Mucosa of descending colon (tissue), 3 donors: ENCODE measurements at regions of chr16 and their contacts with region 1.

Region 1: DNA sequence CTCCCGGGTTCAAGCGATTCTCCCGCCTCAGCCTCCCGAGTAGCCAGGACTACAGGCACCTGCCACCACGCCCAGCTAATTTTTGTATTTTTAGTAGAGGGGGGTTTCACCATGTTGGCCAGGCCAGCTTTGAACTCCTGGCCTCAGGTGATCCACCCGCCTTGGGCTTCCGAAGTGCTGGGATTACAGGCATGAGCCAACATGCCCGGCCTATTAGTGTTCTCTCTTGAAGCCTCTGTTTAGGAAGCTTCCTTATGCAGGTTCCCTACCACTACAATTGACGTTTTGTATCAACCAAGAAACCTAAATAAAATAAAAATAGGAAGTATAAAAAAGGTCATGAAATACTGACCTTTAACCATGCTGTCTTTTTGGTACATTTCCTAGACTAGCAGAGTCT is 16.0 kb downstream of the CHST5 start:
- DNase-seq: no peak
- ATAC-seq: no peak
- H3K4me3 ChIP-seq: no peak overlapping the region
- H3K4me1 ChIP-seq: no peaks in the 10 kb centered on the region
- CTCF ChIP-seq: no peak

Region 2: GRCh38 chr16:75464130-75464918 is 55.6 kb before region 1 on chr16 and contains the start of gene TMEM170A:
- intact Hi-C with region 1: loop called in 1 of 2 experiments (anchors 10 kb)
- DNase-seq: peak; percentile 100
- ATAC-seq: peak; percentile 96
- H3K4me3 ChIP-seq: peak within 1 kb of the TSS; percentile 96
- H3K4me1 ChIP-seq: peaks cover 35% of the 10 kb centered on the region
- CTCF ChIP-seq: peak; percentile 100
- total RNA-seq, gene TMEM170A: 46.7 to 76.8 (median 46.7) TPM

Region 3: GRCh38 chr16:75576384-75576811 is 56.5 kb after region 1 on chr16:
- intact Hi-C with region 1: no loop called
- DNase-seq: no peak
- ATAC-seq: no peak
- H3K4me3 ChIP-seq: no peak overlapping the region
- H3K4me1 ChIP-seq: no peaks in the 10 kb centered on the region
- CTCF ChIP-seq: no peak